ENCODE measurements at regions of chr18 and their contacts with region 1.

Region 1: DNA sequence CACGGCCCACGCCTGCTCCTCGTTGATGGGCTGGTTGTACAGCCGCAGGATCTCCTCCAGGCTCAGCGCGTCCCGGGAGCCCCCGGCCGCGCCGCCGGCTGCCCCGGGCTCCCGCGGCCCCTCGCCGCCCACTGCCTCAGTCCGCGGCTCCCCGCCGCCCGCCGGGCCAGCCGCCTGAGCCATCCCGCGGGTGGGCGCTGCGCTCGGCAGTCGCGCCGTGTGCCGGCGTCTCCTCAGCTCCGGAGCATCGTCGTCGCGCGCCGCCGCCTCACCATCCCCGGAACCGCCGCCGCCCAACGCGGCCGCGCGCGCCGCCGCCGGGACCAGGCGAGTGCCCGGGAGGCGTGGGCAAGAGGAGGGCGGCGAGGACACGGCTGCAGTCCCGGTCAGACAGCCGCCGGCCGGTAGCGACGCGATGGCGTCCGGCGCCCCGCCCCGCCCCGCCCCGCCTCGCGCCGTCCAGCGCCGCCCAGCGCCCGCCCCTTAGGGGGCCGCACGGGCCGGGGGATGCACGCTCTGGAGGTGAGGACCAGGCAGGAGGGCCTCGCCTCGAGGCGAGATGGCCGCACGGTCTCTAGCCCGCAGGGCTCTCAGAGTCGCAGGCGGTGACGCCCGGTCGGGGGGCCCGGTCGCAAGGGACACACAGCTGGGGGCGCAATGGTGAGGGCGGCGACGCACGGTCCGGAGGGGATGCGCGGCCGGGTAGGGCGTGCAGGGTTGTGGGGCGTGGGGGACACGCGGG is at the start of gene SPIRE1:
- DNase-seq: peak; percentile 67
- H3K4me3 ChIP-seq: peak within 1 kb of the TSS; percentile 83 to 84
- H3K27ac ChIP-seq: peak within 1 kb of the TSS; percentile 93 to 97
- H3K4me1 ChIP-seq: no peaks in the 10 kb centered on the region
- H3K27me3 ChIP-seq: no peaks in the 10 kb centered on the region
- CTCF ChIP-seq: peak in 3 of 4 experiments; percentile 22 to 31 (median 25)
- POLR2A ChIP-seq: peak; percentile 79
- total RNA-seq, gene SPIRE1: 21.9 to 23.6 TPM

Region 2: GRCh38 chr18:12271376-12272235 is 386.2 kb before region 1 on chr18:
- intact Hi-C with region 1: loop called (anchors 10 kb)
- DNase-seq: peak; percentile 65
- H3K4me3 ChIP-seq: peak overlapping the region; percentile 22 to 31
- H3K27ac ChIP-seq: peak overlapping the region; percentile 68 to 73
- H3K4me1 ChIP-seq: no peaks in the 10 kb centered on the region
- H3K27me3 ChIP-seq: no peaks in the 10 kb centered on the region
- CTCF ChIP-seq: peak; percentile 20 to 88 (median 80)
- POLR2A ChIP-seq: no peak

Region 3: DNA sequence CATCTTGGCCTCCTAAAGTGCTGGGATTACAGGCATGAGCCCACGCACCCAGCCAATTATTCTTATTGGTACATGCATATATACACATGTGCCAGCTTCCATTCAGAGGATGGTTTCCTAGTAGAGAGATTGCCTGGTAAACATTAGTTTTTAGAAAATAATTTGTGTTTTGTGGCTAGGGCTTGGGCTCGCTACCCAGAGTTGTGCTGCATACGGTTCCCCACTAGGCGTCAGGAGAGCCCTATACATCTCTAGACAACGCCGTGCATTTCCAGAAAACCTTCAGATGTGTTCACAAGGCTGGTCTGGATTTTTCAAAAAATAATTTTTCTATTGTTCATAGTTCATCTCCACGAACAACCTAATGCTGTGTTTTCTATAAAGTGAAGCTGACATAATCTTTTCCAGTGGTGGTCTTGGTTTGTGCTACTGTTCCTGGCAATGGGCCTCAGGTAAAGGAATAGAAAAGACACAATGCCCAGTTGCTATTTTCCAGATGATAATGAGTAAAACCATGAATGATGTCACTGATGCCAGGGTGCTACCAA is 266.2 kb before region 1 on chr18:
- intact Hi-C with region 1: loop called (anchors 2 kb)
- DNase-seq: peak; percentile 57
- H3K4me3 ChIP-seq: no peak overlapping the region
- H3K27ac ChIP-seq: no peak overlapping the region
- H3K4me1 ChIP-seq: no peaks in the 10 kb centered on the region
- H3K27me3 ChIP-seq: no peaks in the 10 kb centered on the region
- CTCF ChIP-seq: peak; percentile 58 to 88 (median 80)
- POLR2A ChIP-seq: no peak

Region 4: DNA sequence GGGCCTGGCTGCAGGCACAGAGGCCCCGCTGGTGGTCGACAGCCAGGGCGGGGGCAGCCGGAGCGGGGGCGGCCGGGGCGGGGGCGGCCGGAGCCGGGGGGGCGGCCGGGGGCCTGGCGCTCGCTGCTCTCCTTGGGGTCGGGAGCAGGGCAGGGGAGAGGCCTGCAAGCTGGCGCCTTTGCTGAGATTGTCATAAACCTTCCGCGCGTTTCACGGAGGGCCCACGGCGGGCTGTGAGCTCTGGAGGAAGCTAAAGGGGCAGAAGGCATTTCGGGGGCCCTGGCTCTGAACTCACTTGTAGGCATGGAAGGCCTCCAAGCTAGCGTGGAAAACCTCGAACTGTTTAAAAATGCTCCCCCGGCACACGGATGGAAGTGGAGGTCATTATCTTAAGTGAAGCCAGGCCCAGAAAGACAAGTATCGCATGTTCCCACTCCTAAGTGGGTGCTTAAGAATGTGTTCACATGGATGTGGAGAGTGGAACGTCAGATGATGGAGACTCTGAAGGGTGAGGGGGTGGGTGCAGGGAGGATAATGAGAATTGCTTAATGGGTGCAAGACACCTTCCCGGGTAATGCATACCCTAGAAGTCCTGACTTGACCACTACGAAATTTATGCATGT is 249.5 kb before region 1 on chr18:
- intact Hi-C with region 1: loop called (anchors 5 kb)
- DNase-seq: no peak
- H3K4me3 ChIP-seq: peak overlapping the region; percentile 46 to 63
- H3K27ac ChIP-seq: peak overlapping the region; percentile 77 to 78
- H3K4me1 ChIP-seq: no peaks in the 10 kb centered on the region
- H3K27me3 ChIP-seq: no peaks in the 10 kb centered on the region
- CTCF ChIP-seq: no peak
- POLR2A ChIP-seq: no peak

Region 5: DNA sequence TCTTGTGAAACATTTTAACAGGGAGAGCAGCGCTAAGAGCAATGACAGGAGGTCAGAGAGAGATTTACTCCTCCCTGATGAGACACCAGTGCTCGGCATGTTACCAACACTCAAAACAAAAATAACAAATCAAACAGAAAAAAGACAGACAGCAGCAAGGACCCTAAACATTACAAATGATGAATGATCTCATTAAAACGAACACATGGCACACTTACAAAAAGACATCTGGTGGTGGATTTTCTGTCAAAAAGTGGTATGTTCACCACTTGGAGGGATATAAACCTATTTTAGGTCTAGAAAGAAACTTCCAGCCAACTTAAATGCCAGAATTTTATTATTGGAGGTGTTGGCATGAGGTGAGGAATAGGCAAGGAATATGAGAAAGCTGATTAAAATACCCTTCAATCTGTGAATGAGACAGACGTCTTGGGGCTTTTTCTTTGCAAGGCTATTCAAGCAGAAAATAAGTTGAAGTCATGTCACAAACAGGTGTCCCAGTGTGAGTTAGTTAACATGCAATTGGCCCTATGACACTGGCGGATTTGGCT is 137.3 kb before region 1 on chr18:
- intact Hi-C with region 1: loop called (anchors 10 kb)
- DNase-seq: no peak
- H3K4me3 ChIP-seq: no peak overlapping the region
- H3K27ac ChIP-seq: no peak overlapping the region
- H3K4me1 ChIP-seq: no peaks in the 10 kb centered on the region
- H3K27me3 ChIP-seq: no peaks in the 10 kb centered on the region
- CTCF ChIP-seq: no peak
- POLR2A ChIP-seq: no peak

Region 6: DNA sequence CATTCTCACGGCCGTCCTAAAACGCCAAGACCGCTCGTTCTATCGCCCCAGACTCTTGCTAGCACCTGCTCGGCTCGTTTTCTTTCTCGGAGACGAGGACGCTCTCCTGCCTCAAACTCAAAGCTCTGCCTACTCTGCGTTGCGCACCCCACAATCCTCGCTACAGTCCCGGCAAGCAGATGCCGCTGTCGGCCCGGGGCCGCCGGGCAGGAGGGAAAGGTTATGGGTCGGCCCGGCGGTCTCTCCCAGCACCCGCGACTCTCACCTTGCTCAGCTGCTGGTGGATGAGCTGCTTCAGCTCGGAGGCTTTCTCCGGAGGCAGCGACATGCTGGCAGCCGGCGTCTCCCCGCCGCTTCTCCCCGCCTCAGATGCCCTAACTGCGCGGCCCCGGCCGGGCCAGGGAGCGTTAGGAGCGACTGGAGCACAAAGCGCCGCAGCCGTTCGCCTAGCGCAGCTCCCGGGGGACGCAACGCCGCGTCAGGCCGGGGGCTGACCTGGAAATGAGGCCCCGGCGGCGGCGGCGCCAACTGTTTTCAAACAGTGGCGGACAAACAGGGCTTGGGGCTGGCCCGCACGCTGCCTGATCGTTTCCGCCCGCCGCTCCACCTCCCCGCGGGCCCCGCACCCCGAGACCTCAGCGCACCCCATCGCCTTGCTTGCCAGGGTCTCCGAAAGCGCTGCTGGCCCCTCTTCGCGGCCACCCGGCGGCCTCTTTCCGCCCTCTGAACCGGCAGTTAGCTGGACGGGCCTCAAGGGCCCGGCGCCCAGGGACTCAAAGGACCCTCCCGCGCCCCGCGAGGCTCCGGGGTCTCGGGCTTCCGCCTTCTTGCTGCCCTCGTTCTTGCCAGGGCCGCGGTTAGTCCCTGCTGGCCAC is 44.6 kb after region 1 on chr18 and contains the starts of genes CEP76 and PSMG2:
- intact Hi-C with region 1: loop called (anchors 5 kb)
- DNase-seq: peak; percentile 81
- H3K4me3 ChIP-seq: peak within 1 kb of the TSS; percentile 83 to 91
- H3K27ac ChIP-seq: peak within 1 kb of the TSS; percentile 93 to 96
- H3K4me1 ChIP-seq: peaks cover 8% of the 10 kb centered on the region
- H3K27me3 ChIP-seq: no peaks in the 10 kb centered on the region
- CTCF ChIP-seq: no peak
- POLR2A ChIP-seq: peak; percentile 75
- total RNA-seq, gene CEP76: 10.5 to 13.3 TPM
- total RNA-seq, gene PSMG2: 73.9 to 78.6 TPM

Measured in prostate gland (tissue), 2 donors.